ENCODE measurements at regions of chr2 and their contacts with region 1.

Region 1: DNA sequence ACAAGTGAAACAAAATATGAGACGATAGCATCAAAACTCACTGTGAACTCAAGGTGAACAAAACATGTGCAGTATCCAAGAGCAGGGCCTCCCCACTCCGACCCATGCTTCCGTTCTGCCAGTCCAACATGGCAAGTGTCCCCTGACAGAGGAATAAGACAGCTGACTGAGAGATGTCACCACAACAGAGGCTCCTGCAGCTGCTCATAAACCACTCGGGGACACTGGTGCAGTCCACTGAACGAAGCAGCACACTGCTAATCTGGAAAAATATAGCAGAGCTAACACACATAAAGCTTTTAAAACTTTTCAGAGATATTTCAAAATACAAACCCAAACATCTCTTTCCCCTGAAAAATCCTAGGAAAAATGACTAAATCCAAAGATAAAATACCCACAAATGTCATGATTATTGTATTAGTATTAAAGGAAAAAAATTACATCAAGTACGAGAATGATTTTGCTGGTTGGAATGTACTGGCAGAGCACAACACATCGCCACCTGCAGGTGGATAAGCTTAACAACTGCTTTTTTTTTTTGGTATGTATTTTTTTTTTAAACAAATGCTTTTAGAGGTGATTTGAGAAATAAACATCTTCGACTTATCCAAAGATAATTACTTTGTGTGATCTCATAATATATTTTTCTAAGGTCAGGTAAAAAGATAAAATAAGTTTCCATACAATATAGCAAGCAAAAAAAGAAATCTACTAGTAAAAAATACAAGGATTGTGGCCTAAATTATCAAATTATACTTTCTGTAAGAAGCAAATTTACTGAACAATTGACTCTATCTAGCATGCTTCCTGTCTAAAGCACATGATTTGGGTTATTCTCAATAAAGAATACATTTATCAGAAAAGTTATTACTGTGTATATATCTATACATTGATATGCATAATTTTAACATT is 18.6 kb downstream of the THADA start:
- DNase-seq: no peak
- ATAC-seq: no peak
- H3K4me3 ChIP-seq: no peak overlapping the region
- H3K27ac ChIP-seq: no peak overlapping the region
- H3K4me1 ChIP-seq: no peaks in the 10 kb centered on the region
- H3K27me3 ChIP-seq: no peaks in the 10 kb centered on the region
- CTCF ChIP-seq: peak; percentile 43 to 82 (median 65); a peak in 5 of 6 replicates
- POLR2A ChIP-seq: no peak
- RAD21 ChIP-seq: peak; percentile 36; the same call in 1 of the 2 replicates

Region 2: GRCh38 chr2:42928692-42929545 is 648.3 kb before region 1 on chr2:
- CTCF ChIA-PET with region 1: no interaction called
- POLR2A ChIA-PET with region 1: no interaction called
- RAD21 ChIA-PET with region 1: no interaction called
- intact Hi-C with region 1: no loop called
- DNase-seq: no peak
- ATAC-seq: peak; percentile 80
- H3K4me3 ChIP-seq: no peak overlapping the region
- H3K27ac ChIP-seq: no peak overlapping the region
- H3K4me1 ChIP-seq: peaks cover 4 to 19% of the 10 kb centered on the region in 2 experiments; a peak in 3 of 4 replicates
- H3K27me3 ChIP-seq: no peaks in the 10 kb centered on the region
- CTCF ChIP-seq: peak; percentile 26 to 55 (median 34); a peak in 5 of 6 replicates
- POLR2A ChIP-seq: no peak
- RAD21 ChIP-seq: no peak; the same call in 1 of the 2 replicates

Region 3: GRCh38 chr2:43559391-43560230 is 17.6 kb before region 1 on chr2:
- CTCF ChIA-PET with region 1: interaction called, 10 read pairs
- POLR2A ChIA-PET with region 1: no interaction called
- RAD21 ChIA-PET with region 1: no interaction called
- intact Hi-C with region 1: no loop called
- DNase-seq: no peak
- ATAC-seq: no peak
- H3K4me3 ChIP-seq: no peak overlapping the region
- H3K27ac ChIP-seq: no peak overlapping the region
- H3K4me1 ChIP-seq: no peaks in the 10 kb centered on the region
- H3K27me3 ChIP-seq: no peaks in the 10 kb centered on the region
- CTCF ChIP-seq: no peak
- POLR2A ChIP-seq: no peak
- RAD21 ChIP-seq: no peak

Region 4: DNA sequence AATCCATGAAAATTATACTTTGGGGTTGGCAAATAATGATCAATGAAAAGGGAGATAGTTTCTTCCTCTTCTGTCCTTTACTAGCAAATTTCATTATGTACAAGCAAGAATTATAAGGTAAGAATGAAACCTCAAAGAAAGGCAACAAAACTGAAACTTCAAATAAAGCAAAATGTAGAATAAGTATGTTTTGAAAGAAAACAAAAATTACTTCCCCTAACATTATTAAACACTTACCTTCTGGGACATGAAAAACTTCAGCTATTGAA is 10.8 kb before region 1 on chr2:
- CTCF ChIA-PET with region 1: interaction called, 17 read pairs
- POLR2A ChIA-PET with region 1: no interaction called
- RAD21 ChIA-PET with region 1: no interaction called
- intact Hi-C with region 1: no loop called
- DNase-seq: no peak
- ATAC-seq: no peak
- H3K4me3 ChIP-seq: no peak overlapping the region
- H3K27ac ChIP-seq: no peak overlapping the region
- H3K4me1 ChIP-seq: no peaks in the 10 kb centered on the region
- H3K27me3 ChIP-seq: no peaks in the 10 kb centered on the region
- CTCF ChIP-seq: no peak
- POLR2A ChIP-seq: no peak
- RAD21 ChIP-seq: no peak